H1 (cell line): ENCODE measurements at regions of chr17 and their contacts with region 1.

Region 1: DNA sequence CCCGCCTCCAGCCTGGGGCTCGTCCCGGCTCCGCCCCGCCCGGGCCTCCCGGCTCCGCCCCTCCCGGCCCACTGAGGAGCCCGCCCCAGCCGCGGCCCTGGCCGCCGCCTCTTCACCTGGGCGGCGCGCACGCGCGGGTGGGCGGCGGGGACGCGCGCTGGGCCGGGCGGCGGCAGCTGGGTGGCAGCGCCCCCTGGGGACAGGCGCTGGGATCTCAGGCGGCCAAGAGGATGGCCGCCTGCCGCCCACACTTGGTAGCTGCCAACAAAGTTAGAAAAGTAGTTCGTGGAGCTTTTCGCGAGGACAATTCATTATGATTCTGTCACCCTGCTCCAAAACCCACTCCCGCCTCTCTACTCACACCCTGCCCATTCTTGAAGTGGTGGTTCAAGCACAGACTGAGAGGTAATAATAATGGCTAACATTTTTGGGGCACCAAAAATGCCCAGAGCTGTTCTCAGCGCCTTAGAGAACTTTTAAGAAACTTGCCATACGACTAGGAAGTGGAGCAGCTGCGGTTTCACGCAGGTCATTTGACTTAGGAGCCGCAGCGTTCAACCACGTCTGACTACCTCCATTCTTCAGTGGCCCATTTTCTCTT is 340 bp upstream of the MYO1D start:
- DNase-seq: peak; percentile 61 to 93
- H3K4me3 ChIP-seq: peak overlapping the region; percentile 66 to 89 (median 78)
- H3K27ac ChIP-seq: peak overlapping the region; percentile 90; the same call in 1 of the 2 replicates
- H3K4me1 ChIP-seq: no peaks in the 10 kb centered on the region; a peak in 1 of 7 replicates
- H3K27me3 ChIP-seq: no peaks in the 10 kb centered on the region
- CTCF ChIP-seq: peak; percentile 77 to 99 (median 89)
- EP300 ChIP-seq: no peak
- POLR2A ChIP-seq: no peak
- RAD21 ChIP-seq: peak; percentile 58 to 75

Region 2: GRCh38 chr17:32783602-32784001 is 93.7 kb before region 1 on chr17:
- CTCF ChIA-PET with region 1: interaction called, 77 read pairs
- POLR2A ChIA-PET with region 1: interaction called, 9 read pairs
- DNase-seq: no peak
- H3K4me3 ChIP-seq: no peak overlapping the region
- H3K27ac ChIP-seq: no peak overlapping the region
- H3K4me1 ChIP-seq: no peaks in the 10 kb centered on the region
- H3K27me3 ChIP-seq: no peaks in the 10 kb centered on the region
- CTCF ChIP-seq: peak in 2 of 3 experiments; percentile 54 to 62; a peak in 2 of 4 replicates
- EP300 ChIP-seq: no peak
- POLR2A ChIP-seq: no peak
- RAD21 ChIP-seq: peak; percentile 82 to 85

Region 3: GRCh38 chr17:32801193-32801592 is 76.1 kb before region 1 on chr17:
- CTCF ChIA-PET with region 1: interaction called, 34 read pairs
- POLR2A ChIA-PET with region 1: interaction called, 3 read pairs
- DNase-seq: no peak
- H3K4me3 ChIP-seq: no peak overlapping the region
- H3K27ac ChIP-seq: no peak overlapping the region
- H3K4me1 ChIP-seq: no peaks in the 10 kb centered on the region
- H3K27me3 ChIP-seq: no peaks in the 10 kb centered on the region
- CTCF ChIP-seq: no peak
- EP300 ChIP-seq: no peak
- POLR2A ChIP-seq: no peak
- RAD21 ChIP-seq: no peak

Region 4: GRCh38 chr17:32854207-32854606 is 23.1 kb before region 1 on chr17:
- CTCF ChIA-PET with region 1: interaction called, 52 read pairs
- POLR2A ChIA-PET with region 1: interaction called, 11 read pairs
- DNase-seq: no peak
- H3K4me3 ChIP-seq: no peak overlapping the region
- H3K27ac ChIP-seq: no peak overlapping the region
- H3K4me1 ChIP-seq: peaks cover 0 to 3% (median 3%) of the 10 kb centered on the region in 4 experiments; a peak in 1 of 7 replicates
- H3K27me3 ChIP-seq: no peaks in the 10 kb centered on the region
- CTCF ChIP-seq: no peak
- EP300 ChIP-seq: no peak
- POLR2A ChIP-seq: no peak
- RAD21 ChIP-seq: no peak

Region 5: GRCh38 chr17:32903774-32904673 is 26.8 kb after region 1 on chr17:
- CTCF ChIA-PET with region 1: interaction called, 47 read pairs
- POLR2A ChIA-PET with region 1: no interaction called
- DNase-seq: no peak
- H3K4me3 ChIP-seq: no peak overlapping the region
- H3K27ac ChIP-seq: no peak overlapping the region
- H3K4me1 ChIP-seq: no peaks in the 10 kb centered on the region
- H3K27me3 ChIP-seq: no peaks in the 10 kb centered on the region
- CTCF ChIP-seq: no peak
- EP300 ChIP-seq: no peak
- POLR2A ChIP-seq: no peak
- RAD21 ChIP-seq: no peak

Region 6: DNA sequence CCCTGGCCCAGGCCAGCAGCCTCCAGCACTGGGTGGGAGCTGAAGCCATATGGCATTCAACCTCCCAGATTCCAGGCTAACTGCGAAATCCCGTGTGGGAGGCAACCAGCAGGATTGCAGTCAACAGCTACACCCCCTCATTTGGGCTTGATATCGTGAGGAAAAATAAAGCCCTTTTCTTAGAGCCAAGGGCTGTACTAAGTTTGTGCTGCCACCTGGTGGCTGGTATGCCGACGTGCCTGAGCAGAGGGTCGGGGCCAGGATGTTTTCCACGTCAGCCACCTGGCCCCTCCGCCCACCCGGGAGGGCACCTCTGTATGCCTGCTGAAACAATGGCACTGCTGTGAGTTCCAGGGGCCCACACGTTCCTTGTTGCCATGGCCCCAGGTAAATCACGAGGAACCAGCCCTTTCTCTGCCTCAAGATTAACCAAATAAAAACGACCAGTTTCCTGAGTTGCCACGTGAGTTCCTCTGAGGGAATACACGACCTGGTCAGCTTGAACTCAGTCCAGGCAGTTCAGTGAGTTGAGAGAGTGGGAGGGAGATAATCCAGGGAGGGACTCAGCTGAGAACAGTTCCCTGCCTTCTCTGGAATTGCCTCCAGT is 59.7 kb after region 1 on chr17:
- CTCF ChIA-PET with region 1: interaction called, 24 read pairs
- POLR2A ChIA-PET with region 1: interaction called, 8 read pairs
- DNase-seq: peak; percentile 77 to 94
- H3K4me3 ChIP-seq: peak overlapping the region in 1 of 4 experiments; percentile 30; a peak in 1 of 8 replicates
- H3K27ac ChIP-seq: peak overlapping the region; percentile 89
- H3K4me1 ChIP-seq: peaks cover 2 to 7% (median 4%) of the 10 kb centered on the region in 4 experiments; a peak in 6 of 7 replicates
- H3K27me3 ChIP-seq: no peaks in the 10 kb centered on the region
- CTCF ChIP-seq: peak; percentile 76 to 97 (median 87)
- EP300 ChIP-seq: peak in 1 of 2 experiments; percentile 90; a peak in 1 of 3 replicates
- POLR2A ChIP-seq: 0 out of 3 replicates have a peak, but pooled peaks of 1 of the 2 experiments have one; percentile 33
- RAD21 ChIP-seq: peak; percentile 65 to 80

Region 7: GRCh38 chr17:33079201-33079600 is 201.9 kb after region 1 on chr17:
- CTCF ChIA-PET with region 1: no interaction called
- POLR2A ChIA-PET with region 1: no interaction called
- DNase-seq: no peak
- H3K4me3 ChIP-seq: no peak overlapping the region
- H3K27ac ChIP-seq: no peak overlapping the region
- H3K4me1 ChIP-seq: no peaks in the 10 kb centered on the region
- H3K27me3 ChIP-seq: no peaks in the 10 kb centered on the region; a peak in 1 of 7 replicates
- CTCF ChIP-seq: no peak
- EP300 ChIP-seq: no peak
- POLR2A ChIP-seq: no peak
- RAD21 ChIP-seq: no peak